Tibial artery (tissue), 4 donors: ENCODE measurements at regions of chr3 and their contacts with region 1.

Region 1: DNA sequence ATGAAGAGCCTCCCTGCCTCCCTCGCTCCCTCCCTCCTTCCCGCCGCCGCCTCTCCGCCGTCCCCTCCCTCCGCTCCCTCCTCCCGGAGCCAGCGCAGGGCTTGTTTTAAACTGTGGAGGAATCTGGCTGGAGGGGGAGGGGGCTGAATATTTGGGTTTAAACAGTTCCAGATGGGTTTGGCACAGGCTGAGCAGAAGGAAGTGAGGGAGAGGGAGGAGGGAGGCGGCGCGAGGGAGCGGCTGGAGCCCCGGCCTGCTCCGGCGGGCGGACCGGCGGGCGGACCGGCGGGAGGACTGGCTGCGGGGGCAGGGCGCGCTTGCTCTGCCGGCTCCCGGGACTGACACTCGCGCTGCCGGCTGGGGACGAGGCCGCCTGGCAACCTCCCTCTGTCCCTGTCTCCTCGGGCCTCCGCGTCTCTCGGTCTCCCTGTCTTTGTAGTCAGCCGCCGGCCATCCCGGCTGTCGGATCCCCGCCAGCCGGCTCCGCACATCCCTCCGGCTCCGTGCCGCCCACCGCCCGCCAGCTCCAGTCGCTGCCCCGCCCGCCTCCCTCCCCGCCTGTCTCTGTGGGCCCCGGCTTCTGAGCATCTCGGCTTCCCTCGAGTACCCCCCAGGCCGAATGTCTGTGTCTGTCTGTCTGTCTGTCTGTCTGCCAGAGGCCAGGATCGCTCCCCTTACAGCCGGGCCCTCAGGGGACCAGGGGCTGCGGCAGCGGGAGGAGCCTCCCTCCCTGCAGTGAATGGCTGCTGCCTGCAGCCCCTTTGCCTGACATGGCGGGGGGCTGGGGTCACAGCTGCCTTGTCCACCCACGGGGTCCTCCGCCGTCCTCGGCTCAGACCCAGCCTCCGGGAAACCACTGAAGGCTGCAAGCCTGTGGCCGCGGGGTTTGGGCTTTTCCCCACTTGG is 7.6 kb downstream of the EPHB3 start:
- DNase-seq: peak; percentile 87 to 89
- H3K4me3 ChIP-seq: peak overlapping the region; percentile 55 to 63
- H3K27ac ChIP-seq: peak overlapping the region; percentile 54 to 65
- H3K4me1 ChIP-seq: peaks cover 0 to 62% (median 22%) of the 10 kb centered on the region in 4 donors
- H3K27me3 ChIP-seq: no peaks in the 10 kb centered on the region
- CTCF ChIP-seq: no peak

Region 2: DNA sequence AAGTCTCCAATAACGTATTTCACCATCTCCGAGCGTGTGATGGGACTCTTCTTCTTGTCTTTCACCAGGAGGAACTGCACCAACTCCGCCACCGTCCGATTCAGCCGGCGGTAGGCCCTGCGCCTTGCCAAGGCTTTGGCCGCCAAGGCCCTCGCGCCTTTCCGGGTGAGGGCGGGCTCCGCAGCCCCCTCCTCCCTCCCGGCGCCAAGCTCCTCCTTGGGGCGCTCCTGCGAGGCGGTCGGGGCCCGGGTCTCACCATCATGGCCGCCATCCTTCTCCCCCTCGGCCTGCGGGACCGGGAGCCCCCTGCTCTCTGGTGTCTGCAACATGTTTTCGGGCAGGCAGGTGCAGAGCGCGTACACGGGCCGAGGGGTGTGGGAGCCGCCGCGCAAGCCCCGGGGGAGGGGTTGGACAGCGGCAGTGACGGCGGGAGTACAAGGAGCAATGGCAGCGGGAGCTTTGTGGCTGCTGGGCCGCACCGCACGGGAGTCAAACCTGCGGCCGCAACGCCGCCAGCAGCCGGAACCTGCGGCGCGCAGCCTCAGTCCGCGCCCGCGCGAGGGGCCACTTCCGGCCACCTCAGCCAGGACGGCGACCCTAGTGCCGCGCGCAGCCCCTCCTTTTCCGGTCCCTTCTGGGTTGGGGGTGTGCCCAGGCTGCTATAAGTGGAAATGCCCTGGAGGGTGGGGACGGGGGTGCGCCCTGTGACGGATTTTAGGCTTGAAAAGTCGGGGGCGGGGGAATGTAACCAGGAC is 142.5 kb after region 1 on chr3 and contains the start of gene MAGEF1:
- intact Hi-C with region 1: loop called (anchors 5 kb)
- DNase-seq: peak; percentile 76 to 88
- H3K4me3 ChIP-seq: peak within 1 kb of the TSS; percentile 60 to 96
- H3K27ac ChIP-seq: peak within 1 kb of the TSS; percentile 82 to 99
- H3K4me1 ChIP-seq: peaks cover 0 to 28% (median 19%) of the 10 kb centered on the region in 4 donors
- H3K27me3 ChIP-seq: no peaks in the 10 kb centered on the region
- CTCF ChIP-seq: no peak